ENCODE measurements at regions of chr4 and their contacts with region 1.

Region 1: GRCh38 chr4:101187841-101188240 is 159.5 kb downstream of the PPP3CA start:
- DNase-seq: no peak
- H3K4me3 ChIP-seq: no peak overlapping the region
- H3K27ac ChIP-seq: no peak overlapping the region
- H3K4me1 ChIP-seq: peaks cover 0 to 21% (median 13%) of the 10 kb centered on the region in 4 donors
- H3K27me3 ChIP-seq: no peaks in the 10 kb centered on the region
- CTCF ChIP-seq: no peak

Region 2: GRCh38 chr4:101114936-101115372 is 72.9 kb before region 1 on chr4:
- intact Hi-C with region 1: loop called (anchors 2 kb)
- DNase-seq: no peak
- H3K4me3 ChIP-seq: no peak overlapping the region
- H3K27ac ChIP-seq: no peak overlapping the region
- H3K4me1 ChIP-seq: peaks cover 0 to 8% (median 0%) of the 10 kb centered on the region in 4 donors
- H3K27me3 ChIP-seq: no peaks in the 10 kb centered on the region
- CTCF ChIP-seq: no peak

Measured in tibial artery (tissue), 4 donors.